ENCODE measurements at regions of chr7 and their contacts with region 1.

Region 1: DNA sequence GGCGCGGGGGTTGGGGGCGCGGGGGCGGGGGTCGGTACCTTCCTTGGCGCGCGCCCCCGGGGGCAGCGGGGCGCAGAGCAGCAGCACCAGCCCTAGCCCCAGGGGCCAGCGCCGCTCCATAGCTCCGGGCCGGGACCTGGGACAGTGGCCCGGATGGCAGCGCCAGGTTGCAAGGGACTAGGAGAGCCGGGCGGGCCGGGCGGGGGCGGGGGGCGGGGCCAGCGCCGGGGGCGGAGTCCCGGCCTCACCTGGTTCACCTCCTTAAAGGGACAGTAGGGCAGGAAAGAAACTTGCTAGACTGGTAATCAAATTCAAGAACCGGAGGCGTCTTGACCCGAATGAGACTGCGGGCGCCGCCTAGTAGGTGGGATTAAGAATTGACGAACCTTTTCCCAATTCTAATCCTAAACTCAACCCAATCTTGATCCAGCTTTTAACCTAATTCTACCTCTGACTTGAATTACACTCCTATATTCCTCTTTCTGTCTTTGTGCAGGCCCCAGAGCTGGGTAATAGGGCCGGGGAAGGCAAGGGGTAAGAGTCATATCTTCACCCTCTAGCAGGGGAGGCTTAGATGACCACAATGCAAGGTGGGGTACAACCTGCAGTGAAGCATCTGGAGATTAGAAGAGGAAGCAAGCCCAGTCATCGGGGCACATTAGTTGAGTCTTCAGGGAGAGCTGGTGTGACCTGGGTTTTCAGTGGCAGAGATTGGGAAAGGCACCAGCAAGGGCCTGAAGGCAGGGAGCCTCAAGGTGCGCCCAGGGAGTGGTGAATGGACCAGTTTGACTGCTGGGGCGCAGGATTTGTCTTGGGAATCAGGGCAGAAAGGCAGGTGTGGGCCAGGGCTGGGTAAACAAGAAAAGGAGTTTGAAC is at the start of gene EPHA1:
- DNase-seq: peak; percentile 88
- ATAC-seq: peak; percentile 88
- H3K4me3 ChIP-seq: peak within 1 kb of the TSS; percentile 82 to 92
- H3K27ac ChIP-seq: peak within 1 kb of the TSS; percentile 22; the same call in 1 of the 2 replicates
- H3K4me1 ChIP-seq: peaks cover 15 to 22% of the 10 kb centered on the region in 2 experiments; a peak in 3 of 4 replicates
- H3K27me3 ChIP-seq: no peaks in the 10 kb centered on the region
- CTCF ChIP-seq: peak; percentile 54 to 76 (median 56)
- POLR2A ChIP-seq: no peak
- RAD21 ChIP-seq: peak; percentile 72
- total RNA-seq, gene EPHA1: 29.9 TPM

Region 2: DNA sequence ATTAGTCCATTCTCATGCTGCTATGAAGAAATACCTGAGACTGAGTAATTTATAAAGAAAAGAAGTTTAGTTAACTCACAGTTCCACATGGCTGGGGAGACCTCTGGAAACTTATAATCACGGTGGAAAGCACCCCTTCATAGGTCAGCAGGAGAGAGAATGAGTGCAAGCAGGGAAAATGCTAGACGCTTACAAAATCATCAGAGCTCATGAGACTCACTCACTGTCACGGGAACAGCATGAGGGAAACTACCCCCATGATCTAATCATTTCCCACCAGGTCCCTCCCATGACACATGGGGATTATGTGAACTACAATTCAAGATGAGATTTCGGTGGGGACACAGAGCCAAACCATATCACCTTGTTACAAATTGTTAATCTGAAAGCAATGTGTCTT is 209.9 kb before region 1 on chr7:
- CTCF ChIA-PET with region 1: no interaction called
- POLR2A ChIA-PET with region 1: no interaction called
- RAD21 ChIA-PET with region 1: no interaction called
- intact Hi-C with region 1: no loop called
- DNase-seq: no peak
- ATAC-seq: no peak
- H3K4me3 ChIP-seq: no peak overlapping the region
- H3K27ac ChIP-seq: no peak overlapping the region
- H3K4me1 ChIP-seq: no peaks in the 10 kb centered on the region
- H3K27me3 ChIP-seq: no peaks in the 10 kb centered on the region
- CTCF ChIP-seq: no peak
- POLR2A ChIP-seq: no peak
- RAD21 ChIP-seq: no peak

Region 3: DNA sequence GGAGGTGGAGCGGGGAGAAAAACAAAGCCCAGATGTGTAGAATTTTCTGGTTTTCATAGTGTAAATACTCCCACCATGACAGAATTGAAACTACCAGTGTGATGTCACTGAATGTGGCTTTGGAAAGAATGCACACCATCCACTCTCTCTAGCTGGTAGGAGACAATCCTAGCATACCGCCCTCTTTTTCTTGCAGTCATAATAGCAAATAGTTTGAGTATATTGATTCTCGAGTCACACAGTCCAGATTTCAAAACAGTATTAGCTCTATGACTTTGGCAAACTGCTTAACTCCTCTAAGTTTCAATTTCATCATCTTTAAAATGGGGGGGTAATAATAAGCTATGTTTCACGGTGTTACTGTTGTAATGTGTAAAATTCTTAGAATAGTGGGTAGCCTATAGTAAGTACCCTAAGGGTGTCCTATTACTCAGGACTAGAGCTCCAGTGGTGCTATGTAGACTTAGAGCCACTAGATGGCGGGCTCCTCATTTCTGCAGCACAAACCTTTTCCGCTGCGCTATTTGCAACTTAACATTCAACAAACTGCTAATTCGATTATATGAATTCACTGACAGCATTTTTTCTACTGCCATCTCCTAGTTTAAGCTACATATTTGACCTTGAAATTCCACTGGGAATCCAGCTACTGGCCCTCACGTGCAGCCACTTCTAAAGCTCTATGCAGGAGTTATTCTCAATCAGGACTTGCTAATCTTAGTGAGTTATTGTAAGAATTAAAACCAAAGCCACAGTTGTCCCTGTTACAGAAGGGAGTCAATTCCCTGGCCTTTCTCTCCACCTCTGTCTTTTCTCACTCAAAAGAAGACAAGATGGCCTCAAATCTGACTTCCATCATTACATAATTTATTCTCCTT is 168.4 kb before region 1 on chr7:
- CTCF ChIA-PET with region 1: interaction called, 3 read pairs
- POLR2A ChIA-PET with region 1: no interaction called
- RAD21 ChIA-PET with region 1: no interaction called
- intact Hi-C with region 1: loop called (anchors 2 kb)
- DNase-seq: peak; percentile 70
- ATAC-seq: peak; percentile 97
- H3K4me3 ChIP-seq: no peak overlapping the region
- H3K27ac ChIP-seq: no peak overlapping the region
- H3K4me1 ChIP-seq: peaks cover 3 to 9% of the 10 kb centered on the region in 2 experiments; a peak in 3 of 4 replicates
- H3K27me3 ChIP-seq: no peaks in the 10 kb centered on the region
- CTCF ChIP-seq: peak; percentile 86 to 97 (median 93)
- POLR2A ChIP-seq: no peak
- RAD21 ChIP-seq: peak; percentile 95

Region 4: DNA sequence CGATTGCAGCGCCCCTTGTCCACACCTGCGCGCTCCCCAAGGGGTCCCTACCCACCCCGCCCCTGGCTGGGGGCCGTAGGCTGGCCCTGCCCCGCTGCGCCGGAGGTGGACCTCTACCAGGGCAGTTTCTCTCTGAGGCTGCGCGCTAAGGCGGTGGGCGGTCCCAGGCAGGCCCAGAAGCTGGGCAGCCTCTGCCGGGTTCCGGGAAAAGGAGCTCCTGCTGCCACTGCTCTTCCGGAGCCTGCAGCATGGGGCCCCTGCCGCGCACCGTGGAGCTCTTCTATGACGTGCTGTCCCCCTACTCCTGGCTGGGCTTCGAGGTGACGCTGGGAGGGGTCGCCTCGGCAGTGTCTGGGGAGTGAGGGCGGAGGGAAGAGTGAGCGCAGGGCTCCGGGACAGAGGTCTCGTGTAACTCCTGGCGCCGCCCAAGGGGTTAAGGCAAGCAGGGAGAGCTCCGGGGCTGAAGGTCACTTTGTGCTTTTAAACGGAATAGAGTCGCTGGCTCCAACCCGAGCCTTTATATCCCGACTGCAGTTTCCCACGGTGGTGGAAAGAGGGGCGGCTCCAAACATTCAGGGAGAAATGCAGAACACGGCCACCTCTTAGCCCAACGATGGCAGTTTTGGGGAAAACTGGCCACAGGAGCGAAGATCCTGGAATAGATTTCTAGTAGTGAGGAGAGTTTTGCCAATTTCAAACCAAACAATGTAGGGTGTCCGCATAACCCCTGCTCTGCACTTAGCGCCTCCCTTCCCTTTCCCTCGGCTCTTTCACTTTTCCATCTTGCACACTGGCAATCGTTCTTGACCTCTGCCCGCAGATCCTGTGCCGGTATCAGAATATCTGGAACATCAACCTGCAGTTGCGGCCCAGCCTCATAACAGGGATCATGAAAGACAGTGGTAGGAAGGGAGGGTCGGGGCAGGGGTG is 145.4 kb before region 1 on chr7 and contains the start of gene GSTK1:
- CTCF ChIA-PET with region 1: no interaction called
- POLR2A ChIA-PET with region 1: no interaction called
- RAD21 ChIA-PET with region 1: no interaction called
- intact Hi-C with region 1: loop called (anchors 5 kb)
- DNase-seq: peak; percentile 32
- ATAC-seq: peak; percentile 98
- H3K4me3 ChIP-seq: peak within 1 kb of the TSS; percentile 89 to 91
- H3K27ac ChIP-seq: peak within 1 kb of the TSS; percentile 46
- H3K4me1 ChIP-seq: peaks cover 9 to 26% of the 10 kb centered on the region in 2 experiments; a peak in 3 of 4 replicates
- H3K27me3 ChIP-seq: no peaks in the 10 kb centered on the region
- CTCF ChIP-seq: no peak
- POLR2A ChIP-seq: peak; percentile 97
- RAD21 ChIP-seq: no peak
- total RNA-seq, gene GSTK1: 83.6 TPM

Region 5: DNA sequence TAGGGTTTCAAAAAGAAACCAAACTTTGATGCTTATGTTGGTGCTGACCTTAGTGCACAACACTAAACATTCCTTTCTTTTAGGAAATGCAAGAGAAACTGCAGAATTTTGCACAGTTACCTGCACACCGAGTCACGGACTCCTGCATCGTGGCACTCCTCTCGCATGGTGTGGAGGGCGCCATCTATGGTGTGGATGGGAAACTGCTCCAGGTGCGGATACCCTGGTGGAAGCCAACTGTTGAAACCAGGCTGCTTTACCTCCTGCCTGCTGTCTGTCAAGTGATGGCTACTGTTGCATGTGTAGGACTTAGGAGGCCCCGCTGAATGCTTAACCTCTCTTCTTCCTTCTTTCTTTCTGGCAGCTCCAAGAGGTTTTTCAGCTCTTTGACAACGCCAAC is 109.1 kb before region 1 on chr7:
- CTCF ChIA-PET with region 1: no interaction called
- POLR2A ChIA-PET with region 1: no interaction called
- RAD21 ChIA-PET with region 1: interaction called in 1 of 2 experiments, 3 read pairs
- intact Hi-C with region 1: loop called (anchors 5 kb)
- DNase-seq: peak; percentile 23
- ATAC-seq: peak; percentile 97
- H3K4me3 ChIP-seq: no peak overlapping the region
- H3K27ac ChIP-seq: no peak overlapping the region
- H3K4me1 ChIP-seq: no peaks in the 10 kb centered on the region
- H3K27me3 ChIP-seq: no peaks in the 10 kb centered on the region
- CTCF ChIP-seq: peak; percentile 47 to 85 (median 85); a peak in 5 of 6 replicates
- POLR2A ChIP-seq: no peak
- RAD21 ChIP-seq: peak; percentile 49

Region 6: DNA sequence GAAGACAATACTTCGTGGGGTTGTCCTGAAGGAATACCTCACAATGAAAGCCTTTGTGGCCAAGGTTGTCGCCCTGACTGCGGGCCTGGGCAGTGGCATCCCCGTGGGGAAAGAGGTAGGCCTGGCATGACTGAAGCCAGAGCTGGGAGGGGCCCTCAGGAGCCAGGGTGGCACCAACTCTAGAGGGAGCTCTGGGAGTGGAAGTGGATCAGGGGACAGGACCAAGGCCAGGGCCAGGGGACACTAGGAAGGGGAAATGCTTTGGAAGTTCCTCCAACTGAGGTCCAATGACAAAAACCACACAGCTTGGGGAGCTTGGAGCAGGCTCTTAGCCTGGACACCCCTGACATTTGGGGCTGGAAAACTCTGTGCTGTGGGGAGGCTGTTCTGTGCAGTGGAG is 87.2 kb before region 1 on chr7:
- CTCF ChIA-PET with region 1: no interaction called
- POLR2A ChIA-PET with region 1: no interaction called
- RAD21 ChIA-PET with region 1: no interaction called
- intact Hi-C with region 1: loop called (anchors 2 kb)
- DNase-seq: no peak
- ATAC-seq: peak; percentile 88
- H3K4me3 ChIP-seq: no peak overlapping the region
- H3K27ac ChIP-seq: no peak overlapping the region
- H3K4me1 ChIP-seq: no peaks in the 10 kb centered on the region
- H3K27me3 ChIP-seq: no peaks in the 10 kb centered on the region
- CTCF ChIP-seq: peak; percentile 35 to 83 (median 49); a peak in 5 of 6 replicates
- POLR2A ChIP-seq: no peak
- RAD21 ChIP-seq: peak; percentile 88

Region 7: DNA sequence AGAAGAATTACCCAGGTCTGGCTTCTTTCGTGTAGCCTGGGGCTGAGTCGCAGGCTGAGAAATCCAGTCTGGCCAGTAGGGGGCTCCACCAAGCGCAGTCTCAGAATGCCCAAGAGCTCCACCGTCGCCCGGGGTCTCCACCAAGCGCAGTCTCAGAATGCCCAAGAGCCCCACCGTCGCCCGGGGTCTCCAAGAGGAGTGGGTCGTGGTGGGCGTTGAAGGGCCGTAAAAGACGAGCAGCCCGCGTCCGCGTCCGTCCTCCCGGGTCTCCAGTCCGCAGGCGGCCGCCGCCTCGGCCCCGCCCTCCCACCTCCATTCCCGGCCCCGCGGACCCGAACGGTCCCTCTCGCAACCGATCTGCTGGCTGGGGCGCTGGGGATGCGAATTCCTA is 28.7 kb before region 1 on chr7:
- CTCF ChIA-PET with region 1: interaction called, 13 read pairs
- POLR2A ChIA-PET with region 1: no interaction called
- RAD21 ChIA-PET with region 1: interaction called in 1 of 2 experiments, 5 read pairs
- intact Hi-C with region 1: no loop called
- DNase-seq: peak; percentile 61
- ATAC-seq: peak; percentile 63
- H3K4me3 ChIP-seq: peak overlapping the region; percentile 73 to 93
- H3K27ac ChIP-seq: peak overlapping the region; percentile 96
- H3K4me1 ChIP-seq: peaks cover 13 to 32% of the 10 kb centered on the region in 2 experiments
- H3K27me3 ChIP-seq: no peaks in the 10 kb centered on the region
- CTCF ChIP-seq: peak in 2 of 3 experiments; percentile 80 to 87; a peak in 4 of 6 replicates
- POLR2A ChIP-seq: no peak
- RAD21 ChIP-seq: no peak

Region 8: DNA sequence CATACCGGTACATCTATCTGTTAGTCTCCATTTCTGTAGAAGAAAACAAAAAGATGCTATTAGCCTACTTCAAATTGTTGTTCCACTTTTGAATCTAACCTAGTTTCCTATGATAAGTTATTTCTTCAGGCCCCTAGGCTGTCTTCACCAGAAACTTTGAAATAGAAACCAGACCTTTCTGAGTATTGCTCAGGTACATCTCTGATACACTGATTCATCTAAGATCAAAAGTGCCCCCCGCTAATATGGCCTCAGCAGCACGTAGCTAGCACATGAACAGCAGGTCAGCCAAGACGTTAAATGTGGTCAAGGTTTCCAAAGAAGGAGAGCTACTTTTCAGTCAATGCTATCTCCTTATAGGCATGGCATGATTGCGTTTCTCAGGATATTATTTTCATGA is 325.0 kb after region 1 on chr7:
- CTCF ChIA-PET with region 1: no interaction called
- POLR2A ChIA-PET with region 1: no interaction called
- RAD21 ChIA-PET with region 1: no interaction called
- intact Hi-C with region 1: no loop called
- DNase-seq: no peak
- ATAC-seq: no peak
- H3K4me3 ChIP-seq: no peak overlapping the region
- H3K27ac ChIP-seq: no peak overlapping the region
- H3K4me1 ChIP-seq: 0 out of 4 replicates have a peak, but pooled peaks cover 0 to 4% of the 10 kb centered on the region in 2 experiments
- H3K27me3 ChIP-seq: no peaks in the 10 kb centered on the region
- CTCF ChIP-seq: no peak
- POLR2A ChIP-seq: no peak
- RAD21 ChIP-seq: no peak

Measured in HCT116 (cell line).